Dendritic cell treated with granulocyte-macrophage colony-stimulating factor and Interleukin-4, amounts not matched to agents 40 ng/mL and 50 ng/mL, for 4 days (primary cell): ENCODE measurements at regions of chrX and their contacts with region 1.

Region 1: DNA sequence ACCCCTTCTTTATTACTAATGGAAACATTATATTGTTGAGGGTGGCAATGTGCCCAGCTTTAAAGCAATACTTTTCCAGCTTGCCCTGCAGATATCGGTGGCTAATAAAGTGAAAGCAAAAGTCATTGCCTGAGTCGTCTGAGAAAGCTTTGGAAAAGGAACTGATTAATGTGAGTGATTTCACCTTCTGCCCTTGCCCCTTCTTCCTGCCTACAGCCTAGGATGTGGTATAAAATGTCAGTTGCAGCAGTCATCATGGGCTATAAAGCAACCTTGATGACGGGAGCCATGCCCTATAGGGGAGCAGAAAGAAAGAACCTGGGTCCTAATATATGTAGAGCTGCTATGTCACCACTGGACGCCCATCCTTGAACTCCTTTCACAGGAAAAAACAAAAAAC is 132.4 kb upstream of the USP9X start:
- H3K4me3 Mint-ChIP-seq: peak overlapping the region; percentile 30
- H3K27ac Mint-ChIP-seq: no peak overlapping the region
- H3K4me1 Mint-ChIP-seq: peaks cover 38% of the 10 kb centered on the region
- H3K27me3 Mint-ChIP-seq: no peaks in the 10 kb centered on the region

Region 2: GRCh38 chrX:40877887-40878286 is 75.0 kb before region 1 on chrX:
- intact Hi-C with region 1: no loop called
- H3K4me3 Mint-ChIP-seq: no peak overlapping the region
- H3K27ac Mint-ChIP-seq: no peak overlapping the region
- H3K4me1 Mint-ChIP-seq: no peaks in the 10 kb centered on the region
- H3K27me3 Mint-ChIP-seq: no peaks in the 10 kb centered on the region

Region 3: DNA sequence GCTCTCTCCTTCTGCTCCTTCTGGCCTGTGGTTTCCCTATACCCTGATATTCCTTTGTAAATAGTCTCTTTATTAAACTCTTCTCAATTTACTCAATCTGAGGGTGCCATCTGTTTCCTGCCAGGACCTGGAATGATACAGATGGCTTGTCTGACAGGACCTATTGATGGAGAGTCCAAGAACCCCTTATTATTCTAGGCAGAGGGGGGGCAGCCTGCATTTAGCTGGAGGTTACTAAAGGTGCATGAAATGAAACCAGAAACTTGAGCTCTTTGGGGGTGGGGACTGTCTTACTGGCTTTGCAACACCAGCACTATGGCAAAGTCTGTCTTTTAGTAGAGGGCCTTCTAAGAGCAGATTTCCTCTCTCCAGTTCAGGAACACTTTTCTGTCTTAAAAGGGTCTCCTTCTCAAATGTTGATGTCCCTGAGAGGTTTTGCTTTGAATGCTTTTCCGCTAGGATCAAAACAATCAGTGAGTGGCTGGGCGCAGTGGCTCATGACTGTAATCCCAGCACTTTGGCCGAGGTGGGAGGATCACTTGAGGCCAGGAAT is 55.1 kb before region 1 on chrX:
- intact Hi-C with region 1: no loop called
- H3K4me3 Mint-ChIP-seq: no peak overlapping the region
- H3K27ac Mint-ChIP-seq: no peak overlapping the region
- H3K4me1 Mint-ChIP-seq: no peaks in the 10 kb centered on the region
- H3K27me3 Mint-ChIP-seq: peaks cover 5% of the 10 kb centered on the region

Region 4: DNA sequence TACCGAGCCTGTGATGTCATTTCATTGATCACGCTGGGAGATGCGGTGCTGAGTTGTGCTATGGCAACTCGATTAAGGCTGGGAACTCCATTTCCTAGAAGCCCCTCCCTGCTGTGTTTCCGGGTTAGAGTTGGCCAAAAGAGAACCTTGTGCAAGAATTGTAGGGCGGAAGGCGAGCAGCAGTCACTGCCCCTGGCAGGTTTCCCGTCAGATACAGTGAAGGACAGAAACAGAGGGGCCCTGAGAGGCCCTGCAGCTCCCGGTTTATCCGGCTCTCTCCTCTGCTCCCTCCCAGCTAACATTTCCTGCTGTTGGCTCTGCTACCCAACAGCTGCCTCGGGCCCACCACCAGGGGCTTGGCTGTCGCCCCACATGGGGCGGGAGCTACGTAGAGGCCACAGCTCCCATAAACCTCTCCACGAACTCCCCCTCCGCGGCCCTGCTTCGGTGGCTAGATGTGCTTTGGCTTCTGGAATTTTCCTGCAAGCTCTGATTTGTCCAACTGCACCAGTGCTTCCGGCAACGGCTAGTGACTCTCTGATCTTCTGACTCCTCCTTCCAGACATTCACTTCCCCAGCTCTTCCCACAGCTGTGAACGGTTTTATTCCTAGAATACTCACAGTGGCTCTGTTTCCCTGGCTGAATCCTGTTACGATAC is 57.5 kb after region 1 on chrX:
- intact Hi-C with region 1: loop called (anchors 10 kb)
- H3K4me3 Mint-ChIP-seq: peak overlapping the region; percentile 70
- H3K27ac Mint-ChIP-seq: peak overlapping the region; percentile 98
- H3K4me1 Mint-ChIP-seq: peaks cover 26% of the 10 kb centered on the region
- H3K27me3 Mint-ChIP-seq: peaks cover 9% of the 10 kb centered on the region

Region 5: DNA sequence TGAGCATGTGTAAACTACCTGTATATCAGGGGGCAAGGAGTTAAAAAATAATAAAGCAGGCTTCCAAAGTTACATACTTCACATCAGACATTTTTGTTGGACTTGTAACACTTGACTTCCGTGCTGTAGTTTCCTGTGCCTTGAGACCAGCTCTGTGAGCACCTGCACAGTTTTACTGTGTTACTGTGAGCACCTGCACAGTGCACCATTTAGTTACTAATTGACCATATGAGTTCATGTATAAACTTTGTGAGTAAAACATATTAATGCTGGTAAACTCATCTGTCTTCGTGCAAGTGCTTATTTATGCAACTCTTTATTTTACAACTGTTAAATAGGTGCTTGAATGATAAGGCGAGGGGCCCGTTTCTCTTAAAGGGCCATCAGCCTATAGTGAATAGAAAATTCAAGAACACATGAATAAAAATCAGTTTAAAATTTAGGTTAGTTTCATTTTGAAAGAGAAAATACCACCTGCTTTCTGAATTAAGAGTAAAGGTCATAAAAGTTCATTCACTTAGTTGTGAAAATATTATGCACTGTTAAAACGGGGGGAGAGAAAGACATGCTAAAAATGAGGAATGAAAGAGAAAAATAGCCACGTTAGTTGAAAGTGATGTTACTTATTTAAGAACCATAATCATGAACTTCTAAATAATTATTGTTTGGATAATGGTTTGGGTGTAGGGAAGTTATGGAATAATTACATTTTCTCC is 174.8 kb after region 1 on chrX:
- intact Hi-C with region 1: no loop called
- H3K4me3 Mint-ChIP-seq: no peak overlapping the region
- H3K27ac Mint-ChIP-seq: no peak overlapping the region
- H3K4me1 Mint-ChIP-seq: peaks cover 16% of the 10 kb centered on the region
- H3K27me3 Mint-ChIP-seq: no peaks in the 10 kb centered on the region

Region 6: GRCh38 chrX:41621211-41621651 is 668.4 kb after region 1 on chrX:
- intact Hi-C with region 1: no loop called
- H3K4me3 Mint-ChIP-seq: no peak overlapping the region
- H3K27ac Mint-ChIP-seq: peak overlapping the region; percentile 53
- H3K4me1 Mint-ChIP-seq: peaks cover 13% of the 10 kb centered on the region
- H3K27me3 Mint-ChIP-seq: no peaks in the 10 kb centered on the region